ENCODE measurements at regions of chr7 and their contacts with region 1.

Region 1: DNA sequence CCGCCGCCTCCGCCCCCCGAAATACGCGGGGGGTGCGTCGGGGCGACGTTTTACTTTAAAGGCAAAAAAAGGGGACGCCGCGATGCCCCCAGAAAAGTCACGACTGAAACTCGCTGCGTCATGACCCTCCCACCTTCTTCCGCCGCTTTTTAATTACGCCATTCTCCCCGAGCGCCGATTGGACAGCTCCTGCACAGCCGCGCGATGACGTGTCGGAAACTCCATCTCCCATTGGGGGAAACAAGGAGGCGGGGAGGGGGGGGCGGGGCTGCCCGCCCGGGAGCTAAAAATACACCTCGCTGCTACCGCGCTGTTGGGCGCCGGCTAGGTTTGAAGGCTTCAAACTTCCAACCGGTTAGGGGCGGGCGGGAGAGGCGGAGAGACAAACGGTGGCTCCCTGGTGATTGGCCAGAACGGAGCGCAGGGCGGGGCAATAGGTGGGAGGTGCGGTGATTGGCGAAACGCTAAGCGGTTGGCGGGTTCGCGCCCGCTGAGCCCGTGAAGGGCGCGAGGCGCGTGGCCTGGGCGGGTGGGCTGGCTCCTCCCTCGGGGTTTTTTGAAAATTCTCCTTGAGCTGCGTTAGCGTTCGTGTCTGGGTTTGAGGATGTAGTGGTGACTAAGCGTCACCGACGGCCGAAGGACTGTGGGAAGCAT is at the start of gene RHEB:
- DNase-seq: peak; percentile 99
- ATAC-seq: peak; percentile 95
- H3K4me3 ChIP-seq: peak within 1 kb of the TSS; percentile 87 to 99
- H3K27ac ChIP-seq: peak within 1 kb of the TSS; percentile 97 to 99
- H3K4me1 ChIP-seq: peaks cover 0 to 3% of the 10 kb centered on the region in 2 donors
- H3K27me3 ChIP-seq: no peaks in the 10 kb centered on the region
- total RNA-seq, gene RHEB: 78.8 to 107 TPM

Region 2: GRCh38 chr7:151459726-151460473 is 60.0 kb before region 1 on chr7:
- intact Hi-C with region 1: loop called (anchors 5 to 10 kb)
- DNase-seq: peak; percentile 85 to 93
- ATAC-seq: peak; percentile 93
- H3K4me3 ChIP-seq: no peak overlapping the region
- H3K27ac ChIP-seq: peak overlapping the region in 1 of 2 donors; percentile 85
- H3K4me1 ChIP-seq: no peaks in the 10 kb centered on the region
- H3K27me3 ChIP-seq: no peaks in the 10 kb centered on the region

Measured in aorta (tissue), 5 donors.